Motor neuron (in vitro differentiated cells): ENCODE measurements at regions of chr2 and their contacts with region 1.

Region 1: DNA sequence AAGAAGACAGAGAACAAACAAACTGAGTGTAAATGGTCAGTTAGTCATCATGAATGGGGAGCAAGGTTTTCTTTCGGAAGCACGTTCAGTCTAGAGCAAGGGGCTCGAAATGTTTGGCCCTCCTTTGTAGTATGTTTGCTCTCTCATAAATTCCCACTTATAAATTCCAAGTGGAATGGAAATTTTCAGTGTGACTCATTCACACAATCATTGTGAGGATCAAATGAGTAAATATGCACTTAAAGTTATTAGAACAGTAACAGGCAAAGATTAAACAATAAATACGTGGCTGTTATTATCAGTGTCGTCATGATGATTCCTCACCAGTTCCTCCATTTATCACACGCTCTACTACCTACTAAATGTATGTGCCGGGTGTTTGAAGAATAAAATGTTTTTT is 10.5 kb downstream of the CNGA3 start:
- ATAC-seq: peak in 3 of 8 experiments; percentile 31 to 86 (median 41)
- H3K4me3 ChIP-seq: no peak overlapping the region
- H3K27ac ChIP-seq: no peak overlapping the region
- H3K4me1 ChIP-seq: peaks cover 0 to 2% of the 10 kb centered on the region in 2 donors

Region 2: DNA sequence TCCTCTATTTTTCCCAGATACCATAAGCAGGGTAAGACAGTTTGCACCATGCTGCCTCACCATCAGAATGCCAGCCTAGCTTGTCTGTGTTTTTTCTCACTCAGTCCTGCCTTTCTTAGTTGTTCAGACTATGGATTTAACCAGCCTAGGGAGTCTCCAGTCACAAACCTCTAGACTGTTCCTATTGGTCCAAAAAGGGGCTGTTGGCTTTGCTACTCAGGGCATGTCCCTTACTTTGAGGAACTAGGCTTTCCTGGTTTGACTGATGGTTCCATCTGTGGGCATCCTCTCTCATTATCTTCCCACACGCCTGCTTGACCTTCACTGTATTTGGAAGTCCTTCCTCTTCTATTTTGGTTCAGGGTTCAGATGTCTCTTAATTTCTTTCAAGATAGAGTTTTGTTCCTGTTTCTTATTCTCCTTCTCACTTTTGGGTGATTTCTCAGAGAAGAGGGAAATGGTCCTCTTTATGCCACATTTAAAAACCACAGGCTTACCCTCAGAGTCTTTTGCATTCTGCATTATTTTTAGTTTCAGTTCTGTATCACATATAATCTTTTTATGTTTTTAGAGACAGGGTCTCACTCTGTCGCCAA is 329.7 kb before region 1 on chr2:
- in situ Hi-C with region 1: loop called in 1 of 9 experiments (anchors 25 kb)
- ATAC-seq: no peak
- H3K4me3 ChIP-seq: no peak overlapping the region
- H3K27ac ChIP-seq: no peak overlapping the region
- H3K4me1 ChIP-seq: peaks cover 0 to 2% of the 10 kb centered on the region in 2 donors

Region 3: GRCh38 chr2:98157557-98157956 is 199.2 kb before region 1 on chr2:
- in situ Hi-C with region 1: no loop called
- ATAC-seq: no peak
- H3K4me3 ChIP-seq: no peak overlapping the region
- H3K27ac ChIP-seq: no peak overlapping the region
- H3K4me1 ChIP-seq: peaks cover 19 to 26% of the 10 kb centered on the region in 2 donors

Region 4: GRCh38 chr2:99651930-99652670 is 1295.4 kb after region 1 on chr2:
- in situ Hi-C with region 1: no loop called
- ATAC-seq: peak in 2 of 8 experiments; percentile 65 to 68
- H3K4me3 ChIP-seq: no peak overlapping the region
- H3K27ac ChIP-seq: no peak overlapping the region
- H3K4me1 ChIP-seq: peaks cover 42 to 51% of the 10 kb centered on the region in 2 donors